ENCODE measurements at regions of chr7 and their contacts with region 1.

Region 1: GRCh38 chr7:116236020-116236630 is 25.8 kb downstream of the TES start:
- DNase-seq: peak in 1 of 2 donors; percentile 75
- H3K4me3 ChIP-seq: no peak overlapping the region
- H3K27ac ChIP-seq: peak overlapping the region in 1 of 2 donors; percentile 91
- H3K4me1 ChIP-seq: peaks cover 8 to 62% of the 10 kb centered on the region in 2 donors
- H3K27me3 ChIP-seq: no peaks in the 10 kb centered on the region
- CTCF ChIP-seq: peak; percentile 33 to 63 (median 38)

Region 2: DNA sequence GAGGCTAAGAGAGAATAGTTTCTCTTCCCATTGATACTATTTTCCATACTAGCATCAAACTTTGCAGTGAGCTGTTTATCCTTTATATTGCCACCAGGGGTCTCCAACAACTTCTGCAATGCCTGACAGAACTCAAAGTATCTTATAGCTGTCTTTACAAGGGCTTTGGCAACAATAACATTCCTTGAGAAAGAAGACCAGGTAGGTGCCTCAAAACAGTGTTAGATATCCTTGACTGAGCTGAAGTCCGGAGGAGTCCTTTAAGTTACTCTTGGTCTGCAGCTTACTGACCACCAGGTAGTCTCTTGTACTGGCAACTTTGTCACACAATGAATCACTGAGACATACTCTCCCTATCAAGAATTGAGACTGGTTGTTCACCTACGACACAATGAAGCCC is 55.8 kb before region 1 on chr7:
- intact Hi-C with region 1: loop called (anchors 1 kb)
- DNase-seq: no peak
- H3K4me3 ChIP-seq: no peak overlapping the region
- H3K27ac ChIP-seq: no peak overlapping the region
- H3K4me1 ChIP-seq: peaks cover 0 to 4% of the 10 kb centered on the region in 2 donors
- H3K27me3 ChIP-seq: no peaks in the 10 kb centered on the region
- CTCF ChIP-seq: peak; percentile 64 to 78 (median 77)

Region 3: DNA sequence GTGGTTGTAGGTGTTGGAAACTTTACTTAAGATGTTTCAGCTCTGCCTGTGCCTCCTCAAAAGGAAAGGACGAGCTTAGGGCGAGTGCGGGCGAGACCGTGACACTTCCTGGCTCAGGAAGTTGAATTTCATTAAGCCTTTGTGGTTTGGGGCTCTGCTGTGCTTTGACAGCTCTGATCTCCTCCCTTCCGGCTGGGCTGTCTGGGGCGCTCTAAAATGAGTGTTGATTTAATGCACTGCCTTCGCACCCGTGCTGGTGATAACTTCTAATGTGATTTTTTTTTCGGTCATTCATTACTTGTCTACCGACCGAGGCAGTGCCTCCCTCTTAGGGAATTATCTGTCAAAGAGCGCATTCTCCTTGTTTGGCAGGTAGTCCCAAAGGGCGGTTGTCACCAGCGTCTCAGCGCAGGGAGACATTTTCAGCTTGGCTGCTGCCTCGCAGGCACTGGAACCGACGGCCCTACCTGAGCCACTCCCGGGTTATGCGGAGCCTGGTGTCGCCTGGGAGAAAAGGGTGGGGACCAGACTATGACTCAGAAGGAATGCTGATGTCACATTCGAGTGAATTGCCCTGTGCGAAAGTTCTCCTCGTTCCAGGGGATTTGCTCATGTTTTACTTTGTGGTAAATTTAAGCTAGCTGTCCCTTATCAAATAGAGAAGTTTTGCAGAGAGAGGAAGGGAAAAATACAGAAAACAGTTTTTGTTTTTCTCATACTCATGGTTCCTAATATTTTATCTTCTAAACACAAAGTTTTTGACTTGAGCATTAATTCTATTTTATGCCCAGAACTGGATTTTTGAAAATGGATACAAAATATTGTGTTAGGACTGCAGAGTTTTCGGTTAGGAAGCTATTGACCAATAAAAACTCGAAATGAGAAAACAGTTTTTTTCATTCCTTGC is 24.9 kb before region 1 on chr7:
- intact Hi-C with region 1: loop called (anchors 2 kb)
- DNase-seq: peak; percentile 64 to 93
- H3K4me3 ChIP-seq: peak overlapping the region; percentile 85 to 89
- H3K27ac ChIP-seq: peak overlapping the region; percentile 91 to 99
- H3K4me1 ChIP-seq: peaks cover 5 to 22% of the 10 kb centered on the region in 2 donors
- H3K27me3 ChIP-seq: no peaks in the 10 kb centered on the region
- CTCF ChIP-seq: no peak